Calu3 (cell line): ENCODE measurements at regions of chr15 and their contacts with region 1.

Region 1: GRCh38 chr15:40182358-40183029 is 21.6 kb downstream of the BUB1B start:
- DNase-seq: no peak
- H3K4me3 Mint-ChIP-seq: no peak overlapping the region
- H3K27ac Mint-ChIP-seq: no peak overlapping the region
- H3K4me1 Mint-ChIP-seq: no peaks in the 10 kb centered on the region
- H3K27me3 Mint-ChIP-seq: no peaks in the 10 kb centered on the region
- CTCF ChIP-seq: no peak

Region 2: GRCh38 chr15:40263024-40263754 is 80.7 kb after region 1 on chr15:
- CTCF ChIA-PET with region 1: interaction called, 10 read pairs
- intact Hi-C with region 1: no loop called
- DNase-seq: no peak
- H3K4me3 Mint-ChIP-seq: no peak overlapping the region
- H3K27ac Mint-ChIP-seq: no peak overlapping the region
- H3K4me1 Mint-ChIP-seq: no peaks in the 10 kb centered on the region
- H3K27me3 Mint-ChIP-seq: no peaks in the 10 kb centered on the region
- CTCF ChIP-seq: no peak